T-cell (primary cell): ENCODE measurements at regions of chr3 and their contacts with region 1.

Region 1: GRCh38 chr3:163159306-163159705 is 1662.7 kb downstream of the OTOL1 start:
- DNase-seq: no peak
- ATAC-seq: no peak
- H3K4me3 ChIP-seq: no peak overlapping the region
- H3K4me3 Mint-ChIP-seq: no peak overlapping the region
- H3K27ac ChIP-seq: no peak overlapping the region
- H3K27ac Mint-ChIP-seq: no peak overlapping the region
- H3K4me1 ChIP-seq: no peaks in the 10 kb centered on the region
- H3K4me1 Mint-ChIP-seq: no peaks in the 10 kb centered on the region
- H3K27me3 ChIP-seq: no peaks in the 10 kb centered on the region
- H3K27me3 Mint-ChIP-seq: no peaks in the 10 kb centered on the region

Region 2: GRCh38 chr3:162973518-162973917 is 185.8 kb before region 1 on chr3:
- CTCF ChIA-PET with region 1: no interaction called
- POLR2A ChIA-PET with region 1: no interaction called
- DNase-seq: no peak
- ATAC-seq: no peak
- H3K4me3 ChIP-seq: no peak overlapping the region
- H3K4me3 Mint-ChIP-seq: no peak overlapping the region
- H3K27ac ChIP-seq: no peak overlapping the region
- H3K27ac Mint-ChIP-seq: no peak overlapping the region
- H3K4me1 ChIP-seq: no peaks in the 10 kb centered on the region
- H3K4me1 Mint-ChIP-seq: no peaks in the 10 kb centered on the region
- H3K27me3 ChIP-seq: no peaks in the 10 kb centered on the region
- H3K27me3 Mint-ChIP-seq: no peaks in the 10 kb centered on the region

Region 3: GRCh38 chr3:163196815-163197374 is 37.6 kb after region 1 on chr3:
- CTCF ChIA-PET with region 1: no interaction called
- POLR2A ChIA-PET with region 1: interaction called in 1 of 2 experiments, 12 read pairs
- DNase-seq: no peak
- ATAC-seq: no peak
- H3K4me3 ChIP-seq: no peak overlapping the region
- H3K4me3 Mint-ChIP-seq: no peak overlapping the region
- H3K27ac ChIP-seq: no peak overlapping the region
- H3K27ac Mint-ChIP-seq: no peak overlapping the region
- H3K4me1 ChIP-seq: no peaks in the 10 kb centered on the region
- H3K4me1 Mint-ChIP-seq: no peaks in the 10 kb centered on the region
- H3K27me3 ChIP-seq: no peaks in the 10 kb centered on the region
- H3K27me3 Mint-ChIP-seq: no peaks in the 10 kb centered on the region